A673 (cell line): ENCODE measurements at regions of chr13 and their contacts with region 1.

Region 1: DNA sequence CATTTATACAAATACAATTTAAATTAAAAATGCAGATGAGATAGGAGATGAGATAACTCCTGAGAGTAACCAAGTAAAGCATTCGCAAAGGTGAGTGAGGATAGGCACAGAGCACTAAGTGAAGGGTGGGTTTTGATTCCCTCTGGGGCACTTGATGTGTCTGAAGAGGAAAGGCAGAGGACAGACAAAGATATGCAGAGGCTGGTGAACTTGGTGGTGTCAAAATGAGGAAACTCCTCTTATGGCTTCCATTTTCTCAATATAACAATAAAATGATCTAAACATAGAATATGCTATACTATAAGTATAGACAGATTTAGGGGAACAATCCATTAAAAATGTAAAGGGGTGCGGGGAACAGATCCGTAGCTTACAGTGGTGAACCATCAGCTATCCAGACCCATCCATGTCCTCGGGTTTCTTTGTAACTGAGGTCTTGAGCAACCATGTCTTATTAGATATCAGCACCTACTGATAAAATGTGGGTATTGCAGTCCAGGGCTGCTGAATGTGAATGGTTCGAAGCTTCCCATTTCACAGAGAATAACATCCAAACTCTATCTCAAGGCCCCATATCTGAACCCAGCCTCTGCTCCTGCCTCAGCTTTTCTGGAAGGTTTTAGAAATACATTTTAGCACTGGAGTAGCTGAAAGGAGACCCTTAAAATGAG is 73.9 kb upstream of the SLC10A2 start:
- DNase-seq: peak; percentile 39
- H3K4me3 ChIP-seq: no peak overlapping the region
- H3K27ac ChIP-seq: no peak overlapping the region
- H3K4me1 ChIP-seq: no peaks in the 10 kb centered on the region
- H3K27me3 ChIP-seq: peaks cover 26% of the 10 kb centered on the region
- CTCF ChIP-seq: peak; percentile 66

Region 2: DNA sequence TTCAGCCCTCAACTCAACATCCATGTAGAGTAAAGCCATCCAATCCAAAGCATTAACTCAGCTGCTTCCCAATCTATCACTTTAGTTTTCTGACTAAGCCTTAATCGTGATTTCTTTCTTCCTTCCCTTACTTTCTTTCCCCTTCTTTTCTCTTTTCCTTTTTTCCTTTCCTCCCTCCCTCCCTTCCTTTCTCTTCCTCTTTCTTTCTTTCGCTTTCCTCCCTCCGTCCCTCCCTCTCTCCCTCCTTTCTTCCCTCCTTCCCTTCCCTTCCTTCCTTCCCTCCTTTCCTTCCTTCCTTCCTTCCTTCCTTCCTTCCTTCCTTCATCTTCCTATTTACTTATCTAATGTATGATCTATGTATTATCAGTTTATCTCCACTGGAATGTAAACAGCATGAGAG is 223.1 kb before region 1 on chr13:
- CTCF ChIA-PET with region 1: interaction called, 4 read pairs
- POLR2A ChIA-PET with region 1: no interaction called
- intact Hi-C with region 1: loop called (anchors 2 kb)
- DNase-seq: peak; percentile 7
- H3K4me3 ChIP-seq: no peak overlapping the region
- H3K27ac ChIP-seq: no peak overlapping the region
- H3K4me1 ChIP-seq: peaks cover 6% of the 10 kb centered on the region
- H3K27me3 ChIP-seq: no peaks in the 10 kb centered on the region
- CTCF ChIP-seq: no peak